Activated naive CD4-positive, alpha-beta T cell treated with anti-CD3 and anti-CD28 coated beads for 36 hours (primary cell): ENCODE measurements at regions of chr11 and their contacts with region 1.

Region 1: GRCh38 chr11:111454561-111455192 is 57.5 kb downstream of the BTG4 start:
- DNase-seq: peak; percentile 85
- H3K4me3 Mint-ChIP-seq: no peak overlapping the region
- H3K27ac Mint-ChIP-seq: no peak overlapping the region
- H3K4me1 Mint-ChIP-seq: no peaks in the 10 kb centered on the region
- H3K27me3 Mint-ChIP-seq: peaks cover 5% of the 10 kb centered on the region

Region 2: GRCh38 chr11:111526501-111526900 is 71.8 kb after region 1 on chr11:
- CTCF ChIA-PET with region 1: interaction called, 4 read pairs
- intact Hi-C with region 1: loop called (anchors 1 kb)
- DNase-seq: peak; percentile 81
- H3K4me3 Mint-ChIP-seq: no peak overlapping the region
- H3K27ac Mint-ChIP-seq: peak overlapping the region; percentile 67
- H3K4me1 Mint-ChIP-seq: peaks cover 72% of the 10 kb centered on the region
- H3K27me3 Mint-ChIP-seq: peaks cover 3% of the 10 kb centered on the region

Region 3: GRCh38 chr11:111574373-111575225 is 119.9 kb after region 1 on chr11:
- CTCF ChIA-PET with region 1: interaction called, 4 read pairs
- intact Hi-C with region 1: loop called (anchors 1 kb)
- DNase-seq: peak; percentile 12
- H3K4me3 Mint-ChIP-seq: peak overlapping the region; percentile 30
- H3K27ac Mint-ChIP-seq: no peak overlapping the region
- H3K4me1 Mint-ChIP-seq: no peaks in the 10 kb centered on the region
- H3K27me3 Mint-ChIP-seq: no peaks in the 10 kb centered on the region

Region 4: GRCh38 chr11:111777094-111778046 is 322.7 kb after region 1 on chr11:
- CTCF ChIA-PET with region 1: interaction called, 18 read pairs
- intact Hi-C with region 1: loop called (anchors 1 kb)
- DNase-seq: peak; percentile 35
- H3K4me3 Mint-ChIP-seq: no peak overlapping the region
- H3K27ac Mint-ChIP-seq: no peak overlapping the region
- H3K4me1 Mint-ChIP-seq: no peaks in the 10 kb centered on the region
- H3K27me3 Mint-ChIP-seq: no peaks in the 10 kb centered on the region